ENCODE measurements at regions of chr7 and their contacts with region 1.

Region 1: DNA sequence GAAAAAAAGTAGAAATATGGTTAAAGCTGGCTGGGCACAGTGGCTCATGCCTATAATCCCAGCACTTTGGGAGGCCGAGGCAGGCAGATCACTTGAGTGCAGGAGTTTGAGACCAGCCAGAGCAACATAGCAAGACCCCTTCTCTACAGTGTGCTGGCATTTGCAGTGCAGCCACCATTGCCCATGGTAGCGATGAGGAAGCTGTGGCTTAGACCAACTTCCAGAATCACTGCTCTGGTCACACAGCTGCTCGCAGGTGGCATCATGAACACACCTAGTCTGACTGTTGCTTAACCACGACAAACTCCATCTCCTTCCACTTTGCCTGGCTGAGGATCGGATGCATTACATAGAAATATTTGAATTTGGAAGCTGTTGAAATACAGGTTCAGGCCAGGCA is 137.1 kb downstream of the CUX1 start:
- DNase-seq: no peak

Region 2: DNA sequence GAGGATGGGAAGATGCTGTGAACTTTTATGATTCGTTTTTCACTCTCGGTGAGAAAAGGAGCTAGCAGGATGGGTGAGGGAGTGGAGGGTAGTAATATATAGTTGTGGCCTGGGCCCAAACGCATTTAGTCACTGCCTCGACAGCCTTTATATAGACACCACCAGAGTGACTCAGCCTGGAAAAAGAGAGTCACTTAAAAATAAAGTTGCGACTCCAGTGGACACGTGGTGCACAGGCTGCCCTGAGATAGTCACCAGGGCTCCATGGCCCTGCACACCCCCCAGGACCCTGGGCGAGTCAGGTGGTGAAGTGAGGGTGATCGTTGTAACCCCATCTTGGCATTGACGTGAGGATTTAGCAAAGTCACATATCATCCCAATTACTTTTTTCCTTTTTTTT is 30.3 kb before region 1 on chr7:
- intact Hi-C with region 1: loop called in 1 of 2 experiments (anchors 2 kb)
- DNase-seq: peak; percentile 69

Region 3: GRCh38 chr7:102050864-102051460 is 96.5 kb after region 1 on chr7:
- intact Hi-C with region 1: no loop called
- DNase-seq: peak; percentile 79

Region 4: DNA sequence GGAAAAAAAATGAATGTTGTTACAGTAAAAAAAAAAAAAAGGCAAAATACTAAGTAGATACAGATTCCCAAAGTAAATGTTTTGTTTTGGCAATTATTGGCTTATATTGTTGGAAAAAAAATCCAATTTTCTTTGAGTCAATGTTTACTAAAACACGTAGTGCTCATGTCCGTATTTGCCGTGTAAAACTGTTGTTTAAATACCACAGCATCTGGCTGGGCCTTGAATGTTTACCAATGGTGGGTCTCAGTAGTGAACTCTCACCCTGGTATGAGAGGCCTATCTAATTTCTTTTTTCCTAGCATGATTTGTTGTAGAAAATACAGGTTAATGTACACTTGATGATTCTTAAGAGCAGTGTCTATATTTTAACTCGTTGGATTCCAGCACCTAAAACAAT is 1532.9 kb after region 1 on chr7:
- intact Hi-C with region 1: no loop called
- DNase-seq: no peak